Naive thymus-derived CD4-positive, alpha-beta T cell (primary cell): ENCODE measurements at regions of chr7 and their contacts with region 1.

Region 1: GRCh38 chr7:2529161-2530070 is 9.8 kb downstream of the LFNG start:
- DNase-seq: peak in 7 of 9 donors; percentile 24 to 76 (median 52)
- ATAC-seq: peak; percentile 67
- H3K4me3 ChIP-seq: peak overlapping the region; percentile 57
- H3K4me3 Mint-ChIP-seq: peak overlapping the region; percentile 65 to 82 (median 76)
- H3K27ac ChIP-seq: peak overlapping the region; percentile 76
- H3K27ac Mint-ChIP-seq: peak overlapping the region; percentile 66 to 96 (median 91)
- H3K4me1 ChIP-seq: peaks cover 40 to 62% of the 10 kb centered on the region in 2 donors
- H3K4me1 Mint-ChIP-seq: peaks cover 33 to 58% (median 44%) of the 10 kb centered on the region in 7 donors
- H3K27me3 ChIP-seq: no peaks in the 10 kb centered on the region
- H3K27me3 Mint-ChIP-seq: no peaks in the 10 kb centered on the region

Region 2: DNA sequence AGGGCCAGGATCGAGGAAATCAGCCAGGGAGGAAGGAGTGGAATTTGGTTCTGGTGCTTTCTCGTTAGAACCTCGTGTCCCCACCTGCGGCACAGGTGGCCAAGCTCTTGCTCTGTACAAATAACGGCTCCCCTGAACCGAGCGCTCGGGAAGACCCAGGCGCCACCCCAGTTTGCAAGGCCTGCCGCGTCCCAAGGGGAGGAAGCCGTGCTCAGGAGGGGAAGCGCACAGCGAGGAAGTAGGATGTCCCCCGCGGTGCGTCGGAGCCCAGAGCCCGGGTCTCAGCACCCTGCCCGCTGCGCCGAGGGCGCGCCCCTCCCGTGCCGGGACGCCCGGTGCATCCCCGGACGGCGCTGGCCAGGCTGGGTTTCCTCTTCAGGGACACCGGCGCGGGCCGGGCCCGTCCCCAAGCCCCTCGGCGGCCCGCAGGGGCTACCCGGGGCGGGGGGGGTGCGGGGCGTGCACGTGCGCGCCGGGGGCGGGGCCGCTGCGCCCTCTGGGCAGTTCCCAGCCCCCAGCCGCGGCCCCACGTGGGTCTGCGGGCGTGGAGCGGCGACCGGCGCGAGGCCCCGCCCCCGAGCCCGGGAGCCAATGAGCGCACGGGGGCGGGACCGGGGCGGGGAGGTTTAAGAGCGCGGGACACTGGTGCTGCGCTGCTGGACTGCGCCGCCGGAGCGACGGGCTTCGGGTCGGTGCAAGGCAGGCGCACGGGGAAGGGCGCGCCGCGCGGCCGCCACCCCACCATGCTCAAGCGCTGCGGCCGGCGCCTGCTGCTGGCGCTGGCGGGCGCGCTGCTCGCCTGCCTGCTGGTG is 10.1 kb before region 1 on chr7 and contains the start of gene LFNG:
- CTCF ChIA-PET with region 1: no interaction called
- POLR2A ChIA-PET with region 1: interaction called, 401 read pairs
- intact Hi-C with region 1: loop called (anchors 1 kb)
- DNase-seq: peak; percentile 64 to 93 (median 77)
- ATAC-seq: peak; percentile 89
- H3K4me3 ChIP-seq: peak within 1 kb of the TSS; percentile 94
- H3K4me3 Mint-ChIP-seq: peak within 1 kb of the TSS; percentile 94 to 99 (median 96)
- H3K27ac ChIP-seq: peak within 1 kb of the TSS; percentile 78
- H3K27ac Mint-ChIP-seq: peak within 1 kb of the TSS; percentile 80 to 92 (median 88)
- H3K4me1 ChIP-seq: peaks cover 20 to 25% of the 10 kb centered on the region in 2 donors
- H3K4me1 Mint-ChIP-seq: peaks cover 14 to 33% (median 30%) of the 10 kb centered on the region in 7 donors
- H3K27me3 ChIP-seq: no peaks in the 10 kb centered on the region
- H3K27me3 Mint-ChIP-seq: peaks cover 0 to 11% (median 0%) of the 10 kb centered on the region in 5 donors
- total RNA-seq, gene LFNG: 114 to 246 (median 151) TPM